ENCODE measurements at regions of chr2 and their contacts with region 1.

Region 1: DNA sequence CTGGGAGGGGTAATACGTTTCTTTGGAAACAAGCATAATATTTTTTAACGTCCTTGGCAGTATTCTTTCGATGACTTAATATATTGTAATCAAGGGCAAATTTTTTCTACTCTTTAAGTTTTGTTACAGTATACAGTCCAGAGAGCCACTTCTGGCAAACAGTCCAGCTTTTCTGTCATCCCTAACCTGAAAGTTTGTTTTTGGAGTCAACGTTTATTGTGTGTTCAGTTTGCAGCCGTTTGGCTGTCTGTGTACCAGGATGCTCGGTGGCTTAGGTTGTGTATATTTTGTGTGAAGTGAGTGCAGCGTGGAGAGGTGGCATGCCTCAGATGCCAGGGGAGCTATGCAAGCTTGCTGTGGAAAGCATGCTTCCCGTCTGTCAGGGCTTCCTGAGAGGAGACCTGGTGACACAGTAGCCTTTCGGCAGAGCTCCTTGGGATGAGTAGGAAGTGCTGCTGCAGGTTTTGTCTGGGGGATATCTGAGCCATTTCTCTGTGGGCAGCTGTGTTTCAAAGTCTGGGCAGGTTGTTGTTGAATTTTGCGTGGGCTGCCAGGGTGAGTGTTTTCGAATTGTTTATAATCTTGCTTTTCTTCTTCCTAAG is 14.7 kb downstream of the MAP3K20 start:
- DNase-seq: no peak
- H3K4me3 ChIP-seq: no peak overlapping the region
- H3K27ac ChIP-seq: peak overlapping the region in 1 of 2 donors; percentile 53
- H3K4me1 ChIP-seq: no peaks in the 10 kb centered on the region
- H3K27me3 ChIP-seq: no peaks in the 10 kb centered on the region
- CTCF ChIP-seq: no peak
- POLR2A ChIP-seq: no peak

Region 2: GRCh38 chr2:173205375-173205774 is 115.0 kb after region 1 on chr2:
- intact Hi-C with region 1: loop called (anchors 5 kb)
- DNase-seq: peak; percentile 63
- H3K4me3 ChIP-seq: no peak overlapping the region
- H3K27ac ChIP-seq: no peak overlapping the region
- H3K4me1 ChIP-seq: no peaks in the 10 kb centered on the region
- H3K27me3 ChIP-seq: no peaks in the 10 kb centered on the region
- CTCF ChIP-seq: no peak
- POLR2A ChIP-seq: no peak

Measured in prostate gland (tissue), 2 donors.